B cell (primary cell): ENCODE measurements at regions of chr1 and their contacts with region 1.

Region 1: GRCh38 chr1:17370618-17371017 is 1.4 kb upstream of the PADI6 start:
- DNase-seq: no peak
- ATAC-seq: no peak
- H3K4me3 ChIP-seq: no peak overlapping the region
- H3K4me3 Mint-ChIP-seq: no peak overlapping the region
- H3K27ac ChIP-seq: no peak overlapping the region
- H3K27ac Mint-ChIP-seq: no peak overlapping the region
- H3K4me1 ChIP-seq: no peaks in the 10 kb centered on the region
- H3K4me1 Mint-ChIP-seq: no peaks in the 10 kb centered on the region
- H3K27me3 ChIP-seq: no peaks in the 10 kb centered on the region
- H3K27me3 Mint-ChIP-seq: peaks cover 6% of the 10 kb centered on the region
- CTCF ChIP-seq: no peak

Region 2: DNA sequence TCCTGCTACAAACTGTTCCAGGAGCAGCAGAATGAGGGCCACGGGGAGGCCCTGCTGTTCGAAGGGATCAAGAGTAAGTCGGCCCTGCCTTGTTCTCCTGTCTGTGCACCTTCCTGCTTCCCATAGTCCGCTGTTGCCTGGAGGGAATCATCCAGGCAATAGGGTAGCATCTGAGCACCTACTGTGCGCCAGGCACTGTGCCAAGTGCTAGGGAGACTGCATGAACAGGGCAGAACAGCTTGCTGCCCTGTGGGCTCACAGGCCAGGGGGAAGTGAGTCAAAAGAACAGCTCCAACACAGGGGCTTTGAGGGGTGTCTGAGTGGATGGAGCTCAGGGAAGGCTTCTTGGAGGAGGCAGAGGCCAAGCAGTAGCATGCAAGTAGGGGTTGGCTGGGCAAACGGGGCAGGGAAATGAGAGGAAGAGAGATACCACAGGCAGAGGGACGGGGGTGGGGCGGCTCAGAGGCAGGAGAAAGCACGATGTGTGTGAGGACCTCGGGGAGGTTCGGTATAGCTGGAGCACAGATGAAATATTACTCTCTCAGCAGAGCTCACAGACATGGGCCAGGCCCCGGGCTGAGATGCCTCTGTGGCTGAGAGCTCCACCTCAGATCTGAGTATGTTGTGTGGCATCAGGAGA is 14.1 kb before region 1 on chr1:
- CTCF ChIA-PET with region 1: no interaction called
- POLR2A ChIA-PET with region 1: interaction called, 18 read pairs
- intact Hi-C with region 1: no loop called
- DNase-seq: no peak
- ATAC-seq: no peak
- H3K4me3 ChIP-seq: peak overlapping the region in 4 of 5 experiments; percentile 18 to 37 (median 30)
- H3K4me3 Mint-ChIP-seq: peak overlapping the region; percentile 71
- H3K27ac ChIP-seq: peak overlapping the region in 1 of 2 donors; percentile 40
- H3K27ac Mint-ChIP-seq: no peak overlapping the region
- H3K4me1 ChIP-seq: peaks cover 11 to 15% of the 10 kb centered on the region in 2 donors
- H3K4me1 Mint-ChIP-seq: peaks cover 13% of the 10 kb centered on the region
- H3K27me3 ChIP-seq: no peaks in the 10 kb centered on the region
- H3K27me3 Mint-ChIP-seq: peaks cover 6% of the 10 kb centered on the region
- CTCF ChIP-seq: no peak

Region 3: DNA sequence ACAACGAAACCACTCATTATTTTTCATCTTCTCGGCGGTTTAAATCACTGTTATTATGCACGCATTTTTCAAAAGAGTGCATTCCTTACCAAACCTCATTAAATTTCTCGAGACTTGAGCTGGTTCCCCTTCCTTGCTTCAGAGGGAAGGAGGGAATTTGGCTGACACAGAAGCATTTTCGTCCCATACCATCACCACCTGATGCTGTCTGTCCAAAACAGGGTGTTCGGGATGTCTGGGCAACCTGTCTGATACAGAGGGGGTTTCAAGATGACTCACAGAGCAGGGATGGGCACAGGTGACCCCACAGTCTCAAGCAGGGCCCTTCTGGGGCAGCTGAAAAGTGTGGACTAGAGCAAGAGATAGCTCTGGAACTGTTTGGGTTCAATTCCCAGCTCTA is 81.1 kb after region 1 on chr1:
- CTCF ChIA-PET with region 1: no interaction called
- POLR2A ChIA-PET with region 1: no interaction called
- intact Hi-C with region 1: no loop called
- DNase-seq: no peak
- ATAC-seq: no peak
- H3K4me3 ChIP-seq: no peak overlapping the region
- H3K4me3 Mint-ChIP-seq: no peak overlapping the region
- H3K27ac ChIP-seq: no peak overlapping the region
- H3K27ac Mint-ChIP-seq: no peak overlapping the region
- H3K4me1 ChIP-seq: peaks cover 3 to 6% of the 10 kb centered on the region in 2 donors
- H3K4me1 Mint-ChIP-seq: peaks cover 10% of the 10 kb centered on the region
- H3K27me3 ChIP-seq: no peaks in the 10 kb centered on the region
- H3K27me3 Mint-ChIP-seq: peaks cover 10% of the 10 kb centered on the region
- CTCF ChIP-seq: no peak